AG04449 (cell line): ENCODE measurements at regions of chr22 and their contacts with region 1.

Region 1: GRCh38 chr22:17171313-17172171 is 12.5 kb upstream of the HDHD5 start:
- DNase-seq: no peak
- H3K4me3 ChIP-seq: peak overlapping the region; percentile 78
- CTCF ChIP-seq: peak; percentile 99

Region 2: DNA sequence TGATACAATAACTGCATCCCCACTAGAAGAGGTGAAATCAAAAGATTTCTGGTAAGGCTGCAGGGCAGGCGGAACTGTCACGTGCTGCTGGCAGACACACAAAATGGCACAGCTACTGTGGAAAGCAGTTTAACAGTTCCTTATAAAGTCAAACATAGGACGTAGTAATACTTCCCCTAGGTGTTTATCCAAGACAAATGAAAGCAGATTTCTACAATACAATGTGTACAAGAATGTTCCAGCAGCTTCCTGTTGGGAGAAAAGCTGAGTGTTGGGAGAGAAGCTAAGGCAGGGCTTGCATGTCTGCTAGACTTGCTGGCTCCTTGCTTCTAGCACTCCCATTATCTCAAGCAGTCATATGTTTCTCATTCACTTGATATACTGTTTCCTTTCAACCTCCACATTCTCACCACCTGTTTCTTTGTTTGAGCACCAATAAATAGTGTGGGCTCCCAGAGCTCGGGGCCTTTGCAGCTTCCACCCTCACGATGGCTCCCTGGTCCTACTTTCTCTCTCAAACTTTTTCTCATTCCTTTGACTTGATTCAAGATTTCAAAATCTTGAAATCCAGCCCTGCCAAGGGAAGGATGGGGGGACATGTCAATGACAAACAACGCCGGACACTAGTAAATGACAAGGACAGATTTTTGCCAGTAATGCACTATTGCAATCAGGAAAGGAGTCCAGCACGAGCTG is 108.0 kb before region 1 on chr22:
- CTCF ChIA-PET with region 1: interaction called, 265 read pairs
- POLR2A ChIA-PET with region 1: no interaction called
- DNase-seq: no peak
- H3K4me3 ChIP-seq: no peak overlapping the region
- CTCF ChIP-seq: no peak

Region 3: GRCh38 chr22:17121227-17122195 is 50.0 kb before region 1 on chr22 and contains the start of gene TMEM121B:
- CTCF ChIA-PET with region 1: interaction called, 15 read pairs
- POLR2A ChIA-PET with region 1: no interaction called
- DNase-seq: no peak
- H3K4me3 ChIP-seq: peak within 1 kb of the TSS; percentile 36
- CTCF ChIP-seq: no peak

Region 4: DNA sequence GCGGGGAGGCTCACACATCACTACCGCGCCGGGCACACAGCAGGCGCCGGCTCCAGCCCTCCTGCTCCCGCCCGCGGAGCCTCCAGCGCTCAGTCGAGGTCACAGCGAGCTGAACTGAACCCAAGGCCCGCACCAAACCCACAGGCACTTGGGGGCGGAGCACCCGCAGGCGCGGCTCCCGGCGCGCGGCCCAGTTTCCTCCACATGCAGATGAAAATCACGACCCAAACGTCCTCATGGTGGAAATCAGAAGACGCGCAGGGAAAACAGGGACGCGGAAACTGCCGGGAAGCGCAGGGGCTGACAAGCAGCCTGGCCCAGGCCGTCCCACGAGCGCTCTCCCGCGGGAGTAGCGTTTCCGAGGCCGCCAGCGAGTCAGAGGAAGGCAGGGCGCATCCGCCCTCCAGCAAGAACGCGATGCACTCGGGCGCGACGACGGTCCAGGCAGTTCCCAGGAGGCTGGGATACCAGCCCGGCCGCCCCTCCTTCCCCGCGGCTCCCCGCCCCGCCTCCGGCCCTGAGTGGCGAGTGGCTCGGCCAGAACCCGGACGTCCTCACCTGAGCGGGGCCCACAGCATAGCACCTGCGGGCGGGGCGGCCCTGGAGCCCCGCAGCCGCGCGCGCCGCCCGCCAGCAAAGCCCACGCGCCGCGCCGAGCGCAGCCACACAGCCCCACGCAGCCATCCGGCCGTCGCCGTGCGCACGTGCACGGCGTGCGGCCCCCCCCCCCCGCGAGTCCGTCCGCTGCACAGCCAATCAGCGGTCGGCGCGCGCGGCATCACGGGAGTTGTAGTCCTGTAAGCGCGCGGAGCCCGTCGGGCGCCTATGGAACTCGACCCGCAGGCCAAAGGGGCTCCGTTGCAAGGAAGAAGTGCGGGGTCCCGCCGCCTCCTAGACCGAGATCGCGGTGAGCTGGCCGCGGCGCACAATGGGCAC is 12.7 kb before region 1 on chr22 and contains the start of gene HDHD5:
- CTCF ChIA-PET with region 1: interaction called, 225 read pairs
- POLR2A ChIA-PET with region 1: interaction called, 20 read pairs
- DNase-seq: no peak
- H3K4me3 ChIP-seq: peak within 1 kb of the TSS; percentile 78
- CTCF ChIP-seq: no peak

Region 5: DNA sequence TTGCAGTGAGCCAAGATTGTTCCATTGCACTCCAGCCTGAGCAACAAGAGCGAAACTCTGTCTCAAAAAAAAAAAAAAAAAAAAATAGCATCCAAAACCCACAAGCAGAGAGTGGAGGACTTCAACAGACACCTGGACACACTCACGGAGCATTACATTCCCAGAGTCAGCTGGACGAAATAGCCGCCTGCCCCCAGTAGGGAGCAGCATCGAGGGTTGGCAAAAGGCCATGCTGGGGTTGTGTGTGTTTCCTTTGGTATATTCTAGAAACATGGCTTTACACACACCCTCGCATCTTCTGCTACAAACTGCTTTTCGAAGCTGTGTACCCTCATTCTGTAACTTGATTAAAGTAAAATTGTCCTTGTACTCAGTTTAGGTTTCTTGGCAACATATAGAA is 42.4 kb after region 1 on chr22:
- CTCF ChIA-PET with region 1: interaction called, 11 read pairs
- POLR2A ChIA-PET with region 1: no interaction called
- DNase-seq: no peak
- H3K4me3 ChIP-seq: no peak overlapping the region
- CTCF ChIP-seq: peak; percentile 21

Region 6: DNA sequence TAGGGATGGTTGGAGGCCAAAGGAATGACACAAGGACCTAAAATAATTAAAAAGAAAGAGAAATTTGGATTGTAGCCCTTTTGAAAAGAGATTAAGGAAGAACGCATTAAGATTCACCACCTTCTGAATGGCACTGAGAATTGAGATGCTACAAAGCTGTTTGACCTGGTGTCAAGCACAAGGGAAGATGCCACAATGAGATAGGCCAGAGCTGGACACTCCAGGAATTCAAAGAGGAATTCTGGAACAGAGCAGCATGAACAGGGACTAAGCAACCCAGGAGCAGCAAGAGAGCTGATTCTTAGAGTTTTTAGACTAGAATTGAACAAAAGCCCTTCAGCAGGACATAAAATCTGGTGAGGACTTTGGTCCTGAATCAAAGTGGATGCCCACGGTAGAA is 186.1 kb after region 1 on chr22:
- CTCF ChIA-PET with region 1: no interaction called
- POLR2A ChIA-PET with region 1: no interaction called
- DNase-seq: no peak
- H3K4me3 ChIP-seq: no peak overlapping the region
- CTCF ChIP-seq: no peak

Region 7: DNA sequence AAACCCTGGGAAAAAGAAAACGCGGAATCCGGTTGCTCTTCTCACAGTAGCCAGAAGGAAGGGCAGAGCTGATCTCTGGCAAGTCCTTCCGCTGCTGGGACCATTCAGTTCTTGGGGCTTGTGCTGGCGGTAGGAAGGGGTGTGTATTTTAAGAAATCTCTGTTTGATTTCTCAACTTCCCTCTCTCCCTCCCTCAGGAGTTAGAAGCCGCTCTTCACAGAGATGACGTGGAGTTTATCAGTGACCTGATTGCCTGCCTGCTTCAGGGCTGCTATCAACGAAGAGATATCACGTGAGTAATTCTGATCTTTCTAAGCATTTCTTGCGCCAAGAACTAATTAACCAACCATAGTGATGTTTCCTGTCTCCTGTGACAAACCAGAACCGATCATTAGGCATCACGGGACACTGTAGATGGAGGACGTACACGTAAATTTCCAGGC is 305.9 kb after region 1 on chr22:
- CTCF ChIA-PET with region 1: no interaction called
- POLR2A ChIA-PET with region 1: no interaction called
- DNase-seq: no peak
- H3K4me3 ChIP-seq: no peak overlapping the region
- CTCF ChIP-seq: no peak